Colonic mucosa (tissue), 4 donors: ENCODE measurements at regions of chr22 and their contacts with region 1.

Region 1: DNA sequence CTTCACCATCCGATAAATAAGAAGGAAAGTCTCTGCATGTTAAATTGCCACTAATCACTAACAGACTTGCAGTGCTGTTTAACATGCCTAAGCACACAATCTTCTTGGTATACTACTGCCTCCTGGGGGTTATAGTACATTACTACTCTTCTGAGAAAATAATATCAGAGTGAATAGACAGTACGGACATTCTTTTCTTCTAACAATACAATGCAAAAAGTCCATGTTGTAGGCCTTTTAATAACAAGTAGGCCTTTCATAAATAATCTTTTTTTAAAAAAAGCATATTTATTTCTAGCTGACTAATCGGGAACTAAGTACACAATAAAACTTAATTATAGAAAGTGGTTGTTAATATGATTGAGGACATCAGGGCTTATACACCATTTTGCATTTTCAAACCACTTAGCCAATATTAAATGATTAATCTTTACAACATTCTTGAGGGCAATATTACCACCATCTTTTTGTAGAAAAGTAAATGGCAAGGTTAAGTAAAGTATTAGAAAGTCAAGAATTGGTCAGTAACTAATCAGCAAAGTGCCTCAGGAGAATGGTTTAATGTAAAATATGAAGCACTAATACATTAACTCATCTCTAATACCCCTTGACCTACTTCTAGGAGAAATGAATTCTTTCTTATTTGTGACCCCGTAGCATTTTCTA is 84.7 kb downstream of the TTC28 start:
- DNase-seq: no peak
- H3K4me3 ChIP-seq: no peak overlapping the region
- H3K27ac ChIP-seq: no peak overlapping the region
- H3K4me1 ChIP-seq: no peaks in the 10 kb centered on the region
- H3K27me3 ChIP-seq: no peaks in the 10 kb centered on the region
- CTCF ChIP-seq: peak; percentile 51

Region 2: DNA sequence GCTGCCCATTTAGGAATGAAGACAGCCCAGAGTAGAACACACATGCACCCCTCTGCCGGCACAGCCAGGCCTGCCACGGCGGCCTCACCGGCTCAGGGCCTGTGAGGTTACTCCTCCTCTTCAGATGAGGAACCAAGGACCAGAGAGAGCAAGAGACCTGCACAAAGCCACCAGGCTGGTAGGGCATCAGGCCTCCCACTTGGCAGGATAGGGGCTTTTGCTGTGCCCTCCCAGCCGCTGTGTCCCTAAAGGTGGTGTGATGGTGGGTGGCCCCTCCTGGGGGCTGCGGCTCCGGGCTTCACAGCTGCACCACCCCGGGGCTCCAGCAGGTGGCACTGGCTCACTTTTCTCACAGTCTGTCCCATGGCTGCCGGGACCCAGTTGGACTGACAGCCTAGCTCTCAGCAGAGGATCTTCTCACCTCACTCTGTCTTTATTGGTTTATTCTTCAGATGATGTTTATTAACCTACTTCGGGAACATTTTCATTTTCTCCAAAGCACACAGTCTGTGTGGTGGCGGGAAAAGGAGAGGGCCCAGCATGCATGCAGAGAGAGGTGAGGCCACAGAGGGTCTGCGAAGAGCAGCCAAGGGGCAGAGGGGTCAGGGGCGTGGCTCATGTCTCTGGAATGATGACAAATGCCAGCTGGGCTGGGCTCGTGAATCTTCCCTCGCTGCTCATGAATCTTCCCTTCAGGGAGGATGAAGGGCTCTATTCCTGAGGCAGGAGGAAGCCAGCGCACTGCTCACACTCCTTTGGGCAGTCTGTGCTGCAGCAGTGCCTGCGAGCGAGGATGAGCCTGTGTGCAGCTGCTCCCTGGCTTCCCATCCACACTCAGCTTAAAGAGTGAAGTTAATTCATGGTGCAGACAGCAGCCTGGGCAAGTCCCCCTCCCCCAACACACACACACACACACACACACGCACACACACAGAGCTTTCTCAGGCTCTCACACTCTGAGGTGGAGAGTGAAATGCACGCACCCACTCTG is 574.8 kb before region 1 on chr22:
- intact Hi-C with region 1: loop called (anchors 5 kb)
- DNase-seq: peak; percentile 73
- H3K4me3 ChIP-seq: no peak overlapping the region
- H3K27ac ChIP-seq: no peak overlapping the region
- H3K4me1 ChIP-seq: no peaks in the 10 kb centered on the region
- H3K27me3 ChIP-seq: no peaks in the 10 kb centered on the region
- CTCF ChIP-seq: peak; percentile 97

Region 3: DNA sequence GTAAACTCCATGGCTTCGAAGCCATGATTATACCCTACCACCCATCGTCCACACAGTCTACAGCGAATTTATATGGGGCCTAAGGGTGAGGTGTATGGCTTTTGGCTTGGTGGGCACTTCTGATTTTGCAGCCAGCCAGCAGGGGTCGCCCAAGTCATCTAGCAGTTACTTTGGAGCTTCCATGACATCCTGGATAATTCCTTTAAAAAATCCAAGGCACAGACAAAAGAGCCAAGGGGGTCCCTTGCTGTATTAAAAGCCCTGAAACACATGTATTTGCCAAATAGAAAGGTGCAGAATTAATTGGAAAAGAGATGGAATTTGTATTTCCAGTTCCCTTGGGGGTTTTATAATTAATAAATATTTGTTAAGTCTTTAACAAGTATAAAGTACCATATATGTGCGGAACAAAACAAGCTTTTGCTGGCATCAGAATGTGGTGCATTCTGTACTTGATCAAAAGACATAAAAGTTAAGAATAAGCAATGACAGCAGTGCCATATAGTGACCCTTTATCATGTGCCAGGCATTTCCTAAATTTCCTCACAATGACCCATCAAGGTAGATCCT is 543.1 kb before region 1 on chr22:
- intact Hi-C with region 1: loop called (anchors 2 kb)
- DNase-seq: peak; percentile 58
- H3K4me3 ChIP-seq: no peak overlapping the region
- H3K27ac ChIP-seq: no peak overlapping the region
- H3K4me1 ChIP-seq: no peaks in the 10 kb centered on the region
- H3K27me3 ChIP-seq: no peaks in the 10 kb centered on the region
- CTCF ChIP-seq: peak; percentile 64

Region 4: DNA sequence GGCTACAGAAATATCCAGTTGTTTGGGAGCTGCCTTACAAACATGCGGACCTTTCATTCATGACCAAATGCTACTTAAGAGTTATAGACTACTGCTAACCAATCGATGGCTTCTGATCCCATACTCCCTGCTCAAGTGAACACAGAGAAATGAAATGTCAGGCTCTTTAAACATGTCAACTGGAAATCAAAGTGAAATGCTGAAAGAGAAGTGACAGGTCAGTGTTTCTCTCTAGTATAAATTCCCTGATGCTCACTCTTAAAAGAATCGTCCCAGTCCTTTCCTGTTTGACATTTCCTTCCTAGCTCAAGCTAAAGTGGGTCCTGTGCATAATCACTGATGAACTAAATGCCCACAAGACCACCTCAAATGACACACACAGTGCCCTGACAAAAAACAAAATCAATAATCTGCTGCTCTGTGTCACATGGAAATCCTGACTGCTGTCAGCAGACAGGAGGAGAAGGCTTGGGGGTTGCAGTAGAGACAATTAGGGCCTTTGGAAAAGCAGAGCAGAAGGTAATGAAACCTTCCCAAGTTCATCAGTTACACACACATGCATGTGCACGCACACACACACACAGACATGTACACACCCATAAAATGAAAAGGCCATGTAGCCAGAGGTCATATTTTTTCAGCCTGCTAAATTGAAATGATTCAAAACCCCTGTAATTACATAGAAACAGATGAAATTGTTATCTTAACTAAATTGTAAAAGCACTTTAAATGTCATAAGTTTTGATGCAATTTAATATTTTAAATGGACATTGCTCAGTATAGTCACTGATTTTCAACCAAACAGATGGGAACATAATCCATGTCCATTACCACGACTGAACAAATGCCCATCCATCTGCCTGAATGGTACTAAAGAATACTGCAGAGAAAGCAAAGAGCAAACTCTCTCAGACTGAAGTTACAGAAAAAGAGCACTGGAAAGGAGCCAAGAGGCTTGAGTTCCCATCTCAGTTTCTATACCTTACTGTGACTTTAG is 246.0 kb before region 1 on chr22:
- intact Hi-C with region 1: no loop called
- DNase-seq: no peak
- H3K4me3 ChIP-seq: no peak overlapping the region
- H3K27ac ChIP-seq: no peak overlapping the region
- H3K4me1 ChIP-seq: no peaks in the 10 kb centered on the region
- H3K27me3 ChIP-seq: no peaks in the 10 kb centered on the region
- CTCF ChIP-seq: no peak

Region 5: DNA sequence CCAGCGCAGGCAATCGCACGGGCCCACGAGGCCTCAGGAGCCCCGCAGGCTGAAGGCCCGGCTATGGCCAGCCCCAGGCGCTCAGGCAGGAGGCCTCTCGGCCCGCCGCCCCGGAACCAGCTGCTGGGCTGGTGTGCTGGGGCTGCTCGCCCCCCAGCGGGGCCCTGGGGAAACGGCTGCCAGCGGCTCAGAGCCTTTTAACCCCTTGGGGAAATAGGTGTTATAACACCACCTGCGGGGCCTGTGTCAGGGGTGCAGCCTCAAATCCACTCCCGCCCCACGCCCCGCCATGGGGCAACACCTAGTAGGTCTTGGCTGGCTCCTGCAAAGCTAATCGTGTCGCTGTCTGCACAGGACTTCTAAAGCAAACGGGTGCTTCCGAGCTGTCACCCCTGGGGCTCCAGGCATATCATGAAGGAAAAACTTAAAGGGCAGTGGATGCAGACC is 152.6 kb before region 1 on chr22:
- intact Hi-C with region 1: loop called (anchors 10 kb)
- DNase-seq: peak; percentile 78
- H3K4me3 ChIP-seq: peak overlapping the region; percentile 54
- H3K27ac ChIP-seq: peak overlapping the region; percentile 60
- H3K4me1 ChIP-seq: no peaks in the 10 kb centered on the region
- H3K27me3 ChIP-seq: no peaks in the 10 kb centered on the region
- CTCF ChIP-seq: peak; percentile 58